IMR-90 (cell line): ENCODE measurements at regions of chr15 and their contacts with region 1.

Region 1: GRCh38 chr15:70474471-70475396 is 288.6 kb downstream of the UACA start:
- DNase-seq: peak; percentile 96
- ATAC-seq: peak; percentile 87
- H3K4me3 ChIP-seq: no peak overlapping the region
- H3K27ac ChIP-seq: peak overlapping the region; percentile 72
- H3K4me1 ChIP-seq: peaks cover 16% of the 10 kb centered on the region
- H3K27me3 ChIP-seq: peaks cover 8% of the 10 kb centered on the region
- CTCF ChIP-seq: 0 out of 2 replicates have a peak, but pooled peaks have one; percentile 2
- POLR2A ChIP-seq: peak; percentile 35; the same call in 1 of the 2 replicates
- RAD21 ChIP-seq: no peak

Region 2: DNA sequence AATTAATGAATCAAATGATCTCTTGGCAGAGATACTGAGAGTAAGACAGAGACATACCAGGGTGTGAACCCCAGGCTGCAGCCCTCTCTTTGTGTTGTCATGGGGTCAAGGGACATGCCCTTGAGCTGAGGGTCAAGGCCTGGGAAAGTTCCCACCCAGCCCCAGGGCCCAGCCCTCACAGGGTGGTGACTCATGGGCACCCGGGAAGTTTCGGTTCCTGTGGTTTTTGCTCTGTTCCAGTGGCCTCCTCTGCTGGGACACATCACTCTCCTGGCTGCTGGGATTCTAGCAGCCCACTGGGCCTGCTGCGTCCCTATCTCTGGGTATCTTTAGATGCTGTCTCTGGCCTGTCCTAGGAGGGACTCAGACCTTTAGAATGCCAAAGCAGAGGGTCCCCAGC is 228.8 kb before region 1 on chr15:
- CTCF ChIA-PET with region 1: no interaction called
- POLR2A ChIA-PET with region 1: no interaction called
- dilution Hi-C with region 1: no loop called
- in situ Hi-C with region 1: no loop called
- intact Hi-C with region 1: no loop called
- DNase-seq: peak; percentile 11
- ATAC-seq: peak; percentile 42; the same call in 1 of the 2 replicates
- H3K4me3 ChIP-seq: no peak overlapping the region
- H3K27ac ChIP-seq: no peak overlapping the region
- H3K4me1 ChIP-seq: no peaks in the 10 kb centered on the region
- H3K27me3 ChIP-seq: peaks cover 36% of the 10 kb centered on the region
- CTCF ChIP-seq: no peak
- POLR2A ChIP-seq: no peak
- RAD21 ChIP-seq: no peak

Region 3: DNA sequence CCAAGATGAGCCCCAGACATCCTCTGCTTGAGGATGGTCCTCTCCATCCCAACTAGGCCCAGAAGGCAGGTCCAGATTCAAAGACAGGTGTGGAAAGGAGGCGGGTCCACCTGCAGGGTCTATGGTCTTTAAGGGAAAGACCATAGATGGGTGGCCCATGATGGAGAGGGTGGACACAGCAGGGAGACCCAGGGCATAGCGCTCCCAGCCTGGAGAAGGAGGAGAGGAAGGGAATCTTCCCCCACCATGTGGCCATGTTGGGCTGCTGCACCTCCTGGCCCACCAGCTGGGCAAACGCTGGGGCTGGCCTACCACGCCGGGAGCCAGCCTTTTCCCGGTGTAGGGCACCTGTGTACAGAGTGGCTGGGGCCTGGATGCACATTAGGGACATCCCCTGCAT is 111.8 kb before region 1 on chr15:
- CTCF ChIA-PET with region 1: no interaction called
- POLR2A ChIA-PET with region 1: no interaction called
- dilution Hi-C with region 1: no loop called
- in situ Hi-C with region 1: no loop called
- intact Hi-C with region 1: no loop called
- DNase-seq: peak; percentile 18
- ATAC-seq: peak; percentile 83
- H3K4me3 ChIP-seq: no peak overlapping the region
- H3K27ac ChIP-seq: no peak overlapping the region
- H3K4me1 ChIP-seq: no peaks in the 10 kb centered on the region
- H3K27me3 ChIP-seq: peaks cover 25% of the 10 kb centered on the region; the same call in 1 of the 2 replicates
- CTCF ChIP-seq: peak; percentile 47
- POLR2A ChIP-seq: no peak
- RAD21 ChIP-seq: peak; percentile 63

Region 4: GRCh38 chr15:70376929-70377691 is 97.6 kb before region 1 on chr15:
- CTCF ChIA-PET with region 1: no interaction called
- POLR2A ChIA-PET with region 1: no interaction called
- dilution Hi-C with region 1: no loop called
- in situ Hi-C with region 1: no loop called
- intact Hi-C with region 1: loop called (anchors 10 kb)
- DNase-seq: peak; percentile 2
- ATAC-seq: peak; percentile 56
- H3K4me3 ChIP-seq: no peak overlapping the region
- H3K27ac ChIP-seq: no peak overlapping the region
- H3K4me1 ChIP-seq: no peaks in the 10 kb centered on the region
- H3K27me3 ChIP-seq: peaks cover 64% of the 10 kb centered on the region
- CTCF ChIP-seq: no peak
- POLR2A ChIP-seq: no peak
- RAD21 ChIP-seq: no peak